HEK293 (cell line): ENCODE measurements at regions of chr10 and their contacts with region 1.

Region 1: DNA sequence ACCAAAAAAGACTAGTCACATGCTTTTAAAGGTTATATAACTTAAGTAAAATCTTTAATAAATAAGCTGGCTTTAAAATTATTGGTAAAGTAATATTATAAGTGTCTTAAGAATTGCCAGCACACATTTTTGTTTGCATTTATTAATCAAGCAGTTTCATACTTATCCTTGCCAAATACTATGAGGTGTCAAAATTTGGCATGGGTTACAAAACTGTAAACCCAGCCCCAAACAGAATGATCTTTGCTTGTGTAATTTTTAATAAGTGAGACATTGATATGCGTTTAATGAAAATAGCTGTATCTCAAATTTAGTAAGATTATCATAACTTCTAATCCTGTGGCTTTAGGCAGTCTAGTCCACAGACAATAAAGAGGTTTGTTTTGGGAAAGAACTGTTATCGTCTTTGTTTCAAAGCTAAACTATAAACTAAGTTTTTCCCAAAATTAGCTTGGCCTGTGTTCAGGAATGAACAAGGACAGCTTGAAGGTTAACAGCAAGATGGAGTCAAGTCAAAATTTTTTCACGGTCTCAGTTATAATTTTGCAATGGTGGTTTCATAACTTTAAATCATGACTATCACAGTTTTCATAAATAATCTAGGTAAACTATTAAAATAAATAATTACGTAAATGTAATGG is 72.8 kb downstream of the ST8SIA6 start:
- H3K4me3 ChIP-seq: no peak overlapping the region
- H3K27ac ChIP-seq: no peak overlapping the region
- H3K4me1 ChIP-seq: no peaks in the 10 kb centered on the region
- CTCF ChIP-seq: no peak

Region 2: GRCh38 chr10:17576768-17577167 is 195.1 kb after region 1 on chr10:
- CTCF ChIA-PET with region 1: no interaction called
- POLR2A ChIA-PET with region 1: interaction called, 12 read pairs
- H3K4me3 ChIP-seq: no peak overlapping the region
- H3K27ac ChIP-seq: no peak overlapping the region
- H3K4me1 ChIP-seq: no peaks in the 10 kb centered on the region
- CTCF ChIP-seq: no peak